T-cell (primary cell): ENCODE measurements at regions of chr7 and their contacts with region 1.

Region 1: GRCh38 chr7:108525985-108526767 is at the start of gene PNPLA8:
- DNase-seq: peak; percentile 100
- ATAC-seq: peak; percentile 90 to 96 (median 94)
- H3K4me3 ChIP-seq: peak within 1 kb of the TSS; percentile 90 to 96
- H3K4me3 Mint-ChIP-seq: peak within 1 kb of the TSS; percentile 91 to 96 (median 95)
- H3K27ac ChIP-seq: peak within 1 kb of the TSS; percentile 99
- H3K27ac Mint-ChIP-seq: peak within 1 kb of the TSS; percentile 96 to 98
- H3K4me1 ChIP-seq: peaks cover 19% of the 10 kb centered on the region in 2 experiments
- H3K4me1 Mint-ChIP-seq: peaks cover 38 to 44% (median 42%) of the 10 kb centered on the region in 3 donors
- H3K27me3 ChIP-seq: no peaks in the 10 kb centered on the region
- H3K27me3 Mint-ChIP-seq: no peaks in the 10 kb centered on the region
- total RNA-seq, gene PNPLA8: 17.8 to 55.5 (median 21.8) TPM

Region 2: GRCh38 chr7:108503112-108504026 is 22.8 kb before region 1 on chr7:
- CTCF ChIA-PET with region 1: interaction called in 1 of 2 experiments, 5 read pairs
- POLR2A ChIA-PET with region 1: interaction called, 8 to 11 read pairs
- DNase-seq: no peak
- ATAC-seq: no peak
- H3K4me3 ChIP-seq: no peak overlapping the region
- H3K4me3 Mint-ChIP-seq: no peak overlapping the region
- H3K27ac ChIP-seq: peak overlapping the region; percentile 21
- H3K27ac Mint-ChIP-seq: peak overlapping the region in 1 of 2 donors; percentile 78
- H3K4me1 ChIP-seq: no peaks in the 10 kb centered on the region
- H3K4me1 Mint-ChIP-seq: peaks cover 0 to 10% (median 7%) of the 10 kb centered on the region in 3 donors
- H3K27me3 ChIP-seq: no peaks in the 10 kb centered on the region
- H3K27me3 Mint-ChIP-seq: no peaks in the 10 kb centered on the region

Region 3: DNA sequence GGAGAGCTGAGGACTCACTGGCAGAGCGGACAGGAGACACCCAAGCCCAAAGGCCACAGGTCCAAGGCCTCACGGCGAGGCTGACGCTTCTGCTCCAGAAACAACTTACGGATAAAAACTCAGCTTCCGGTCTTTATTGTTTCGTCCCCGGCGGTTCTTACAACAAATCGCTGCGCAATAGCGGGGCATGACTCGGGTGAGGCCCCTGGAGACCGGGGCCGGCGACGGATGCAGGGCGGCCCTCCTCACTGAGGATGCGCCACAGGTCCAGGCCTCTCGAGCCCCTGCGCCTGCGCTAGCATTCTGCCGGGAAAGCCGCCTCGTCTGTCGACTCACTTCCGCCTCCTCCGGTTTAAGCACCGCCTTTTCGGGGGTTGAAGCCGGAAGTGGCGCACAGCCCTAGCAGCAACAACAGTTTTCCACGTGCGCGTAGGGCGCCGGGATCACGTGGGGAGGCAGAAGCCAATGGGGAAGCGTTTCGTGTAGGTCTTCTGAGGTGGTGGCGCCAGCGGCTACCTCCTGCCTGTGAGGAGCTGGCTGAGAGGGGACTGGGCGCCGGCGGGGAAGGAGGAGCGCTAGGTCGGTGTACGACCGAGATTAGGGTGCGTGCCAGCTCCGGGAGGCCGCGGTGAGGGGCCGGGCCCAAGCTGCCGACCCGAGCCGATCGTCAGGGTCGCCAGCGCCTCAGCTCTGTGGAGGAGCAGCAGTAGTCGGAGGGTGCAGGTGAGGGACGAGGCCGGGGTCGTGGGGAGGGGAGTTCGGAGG is 43.4 kb after region 1 on chr7 and contains the starts of genes DNAJB9 and THAP5:
- CTCF ChIA-PET with region 1: interaction called in 1 of 2 experiments, 8 read pairs
- POLR2A ChIA-PET with region 1: interaction called, 6 to 56 read pairs
- DNase-seq: peak; percentile 96 to 100 (median 100)
- ATAC-seq: peak; percentile 89 to 93 (median 91)
- H3K4me3 ChIP-seq: peak within 1 kb of the TSS; percentile 71 to 85
- H3K4me3 Mint-ChIP-seq: peak within 1 kb of the TSS; percentile 94 to 97 (median 96)
- H3K27ac ChIP-seq: peak within 1 kb of the TSS; percentile 99
- H3K27ac Mint-ChIP-seq: peak within 1 kb of the TSS; percentile 99 to 100
- H3K4me1 ChIP-seq: peaks cover 17 to 21% of the 10 kb centered on the region in 2 experiments
- H3K4me1 Mint-ChIP-seq: peaks cover 64 to 74% (median 66%) of the 10 kb centered on the region in 3 donors
- H3K27me3 ChIP-seq: no peaks in the 10 kb centered on the region
- H3K27me3 Mint-ChIP-seq: no peaks in the 10 kb centered on the region
- total RNA-seq, gene DNAJB9: 20.5 to 60.8 (median 27.9) TPM
- total RNA-seq, gene THAP5: 20.8 to 38.7 (median 36.1) TPM